Tibial artery (tissue), 4 donors: ENCODE measurements at regions of chr18 and their contacts with region 1.

Region 1: GRCh38 chr18:35580701-35581539 is 620 bp upstream of the GALNT1 start:
- DNase-seq: peak; percentile 58 to 78
- H3K4me3 ChIP-seq: peak overlapping the region; percentile 80 to 82
- H3K27ac ChIP-seq: peak overlapping the region; percentile 96 to 98
- H3K4me1 ChIP-seq: peaks cover 0 to 16% (median 8%) of the 10 kb centered on the region in 4 donors
- H3K27me3 ChIP-seq: no peaks in the 10 kb centered on the region
- CTCF ChIP-seq: no peak

Region 2: DNA sequence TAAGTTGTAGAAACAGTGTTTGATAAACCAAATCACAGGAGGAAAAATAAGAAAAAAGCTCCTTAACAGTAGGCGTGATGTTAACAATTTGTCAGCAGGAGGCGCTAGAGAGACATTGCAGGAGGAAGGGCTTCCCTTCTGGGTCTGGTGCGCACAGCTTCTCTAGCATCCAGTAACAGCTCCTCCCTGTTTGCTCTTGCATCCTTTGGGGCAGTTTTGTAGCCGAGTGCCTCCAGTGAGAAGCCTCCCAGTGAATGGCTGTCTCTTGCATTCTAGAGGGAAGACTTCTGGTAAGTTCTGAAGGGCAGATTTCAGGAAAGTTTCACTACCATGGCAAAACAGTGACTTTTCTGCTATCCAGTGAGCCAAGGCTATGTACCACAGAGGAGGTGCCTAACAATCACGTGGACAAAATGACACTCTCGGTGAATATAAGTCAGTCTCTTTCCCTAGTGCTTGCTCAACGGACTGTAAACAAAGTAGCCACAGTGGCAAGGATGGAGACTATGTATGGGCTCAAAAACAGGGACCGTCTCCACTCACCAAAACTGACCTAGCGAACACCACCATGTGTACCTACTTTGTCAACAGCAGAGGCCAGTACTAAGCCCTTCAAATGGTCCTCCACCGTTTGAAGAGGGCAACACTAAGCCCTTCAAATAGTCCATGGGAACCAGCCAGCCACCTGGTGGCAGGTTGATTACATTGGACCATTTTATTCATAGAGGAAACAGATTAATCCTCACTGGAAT is 194.1 kb before region 1 on chr18:
- intact Hi-C with region 1: loop called (anchors 10 kb)
- DNase-seq: peak; percentile 66 to 72
- H3K4me3 ChIP-seq: no peak overlapping the region
- H3K27ac ChIP-seq: no peak overlapping the region
- H3K4me1 ChIP-seq: peaks cover 0 to 17% (median 2%) of the 10 kb centered on the region in 4 donors
- H3K27me3 ChIP-seq: no peaks in the 10 kb centered on the region
- CTCF ChIP-seq: peak; percentile 68 to 88

Region 3: GRCh38 chr18:35478520-35479435 is 102.1 kb before region 1 on chr18:
- intact Hi-C with region 1: no loop called
- DNase-seq: no peak
- H3K4me3 ChIP-seq: no peak overlapping the region
- H3K27ac ChIP-seq: peak overlapping the region in 1 of 2 donors; percentile 32
- H3K4me1 ChIP-seq: peaks cover 0 to 34% (median 12%) of the 10 kb centered on the region in 4 donors
- H3K27me3 ChIP-seq: no peaks in the 10 kb centered on the region
- CTCF ChIP-seq: no peak